ENCODE measurements at regions of chr17 and their contacts with region 1.

Region 1: DNA sequence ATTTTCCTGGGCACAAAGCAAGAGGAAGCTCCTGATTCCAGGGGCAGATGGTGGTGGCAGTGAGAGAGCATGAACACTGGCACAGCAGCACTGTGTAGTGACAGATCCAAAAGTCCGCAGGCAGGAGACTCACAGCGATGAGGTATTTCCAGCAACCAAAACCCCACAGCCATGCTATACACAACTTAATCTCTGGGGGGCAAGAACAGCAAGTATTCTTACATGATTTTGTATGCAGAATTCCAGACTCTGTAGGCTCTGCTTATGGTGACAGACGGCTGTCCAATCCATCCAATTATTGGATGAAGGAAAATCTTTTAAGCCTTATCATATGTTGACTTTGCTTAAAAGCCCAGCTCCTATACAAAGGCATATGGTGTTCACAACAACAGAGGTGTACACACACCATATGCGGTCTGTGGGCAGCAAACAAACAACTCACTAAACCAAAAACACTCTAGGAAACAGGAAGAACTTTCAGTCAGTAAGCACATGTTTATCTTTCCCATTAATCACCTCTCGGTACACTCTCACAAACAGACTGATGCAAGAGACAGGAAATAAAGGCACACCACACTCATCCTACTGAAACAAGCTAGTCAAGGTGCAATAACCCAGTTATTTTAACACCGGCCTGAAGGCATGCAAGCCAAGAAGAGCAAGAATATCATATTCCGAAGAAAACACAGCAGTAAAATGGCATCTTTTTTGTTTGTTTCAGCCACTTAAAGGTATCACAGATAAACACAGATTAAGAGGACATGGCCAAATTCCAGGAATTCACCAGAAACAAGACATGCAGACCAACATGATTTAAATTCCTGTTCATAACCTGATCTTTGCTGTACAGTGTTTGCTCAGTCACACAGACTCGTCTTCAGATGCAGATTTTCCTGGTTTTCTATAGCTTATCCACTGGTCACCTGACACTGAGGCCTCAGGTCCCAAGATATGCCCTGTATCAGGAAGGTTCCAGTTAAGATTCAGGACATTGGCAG is 47.8 kb downstream of the ERN1 start:
- DNase-seq: peak; percentile 87
- H3K4me3 ChIP-seq: no peak overlapping the region
- H3K27ac ChIP-seq: peak overlapping the region; percentile 58
- H3K4me1 ChIP-seq: peaks cover 29% of the 10 kb centered on the region
- H3K27me3 ChIP-seq: no peaks in the 10 kb centered on the region
- CTCF ChIP-seq: no peak
- POLR2A ChIP-seq: peak; percentile 30

Region 2: GRCh38 chr17:64097196-64097936 is 15.3 kb after region 1 on chr17:
- CTCF ChIA-PET with region 1: interaction called, 6 read pairs
- POLR2A ChIA-PET with region 1: no interaction called
- dilution Hi-C with region 1: no loop called
- intact Hi-C with region 1: loop called (anchors 1 kb)
- DNase-seq: peak; percentile 97
- H3K4me3 ChIP-seq: no peak overlapping the region
- H3K27ac ChIP-seq: peak overlapping the region; percentile 83
- H3K4me1 ChIP-seq: peaks cover 26% of the 10 kb centered on the region
- H3K27me3 ChIP-seq: no peaks in the 10 kb centered on the region
- CTCF ChIP-seq: no peak
- POLR2A ChIP-seq: no peak

Region 3: DNA sequence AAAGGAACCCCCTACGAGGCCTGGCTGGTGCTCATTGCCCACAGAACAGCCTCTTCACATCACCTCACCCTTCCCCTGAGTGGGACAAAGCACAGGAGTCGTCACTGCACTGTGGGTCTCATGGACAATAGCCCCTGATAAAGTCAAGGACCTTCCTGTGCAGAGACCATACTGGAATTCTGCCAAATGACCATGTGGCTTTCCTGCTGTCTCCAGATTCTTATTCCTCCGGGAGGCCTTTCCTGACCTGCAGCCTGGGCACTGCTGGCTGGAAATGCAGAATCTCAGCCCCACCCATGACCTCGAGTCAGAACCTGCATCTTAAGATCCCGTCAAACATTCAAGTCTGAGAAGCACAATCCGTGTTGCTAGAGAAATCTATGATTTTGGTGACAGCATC is 108.4 kb after region 1 on chr17:
- CTCF ChIA-PET with region 1: no interaction called
- POLR2A ChIA-PET with region 1: no interaction called
- dilution Hi-C with region 1: no loop called
- intact Hi-C with region 1: no loop called
- DNase-seq: no peak
- H3K4me3 ChIP-seq: no peak overlapping the region
- H3K27ac ChIP-seq: no peak overlapping the region
- H3K4me1 ChIP-seq: peaks cover 2% of the 10 kb centered on the region
- H3K27me3 ChIP-seq: no peaks in the 10 kb centered on the region
- CTCF ChIP-seq: no peak
- POLR2A ChIP-seq: no peak